ENCODE measurements at regions of chr17 and their contacts with region 1.

Region 1: GRCh38 chr17:41738077-41738735 is 3.8 kb upstream of the HAP1 start:
- DNase-seq: peak; percentile 69
- ATAC-seq: peak; percentile 88
- H3K4me3 ChIP-seq: peak overlapping the region in 1 of 2 experiments; percentile 26; a peak in 1 of 4 replicates
- H3K27ac ChIP-seq: peak overlapping the region; percentile 78
- H3K4me1 ChIP-seq: peaks cover 23% of the 10 kb centered on the region
- H3K27me3 ChIP-seq: no peaks in the 10 kb centered on the region
- CTCF ChIP-seq: peak; percentile 94

Region 2: DNA sequence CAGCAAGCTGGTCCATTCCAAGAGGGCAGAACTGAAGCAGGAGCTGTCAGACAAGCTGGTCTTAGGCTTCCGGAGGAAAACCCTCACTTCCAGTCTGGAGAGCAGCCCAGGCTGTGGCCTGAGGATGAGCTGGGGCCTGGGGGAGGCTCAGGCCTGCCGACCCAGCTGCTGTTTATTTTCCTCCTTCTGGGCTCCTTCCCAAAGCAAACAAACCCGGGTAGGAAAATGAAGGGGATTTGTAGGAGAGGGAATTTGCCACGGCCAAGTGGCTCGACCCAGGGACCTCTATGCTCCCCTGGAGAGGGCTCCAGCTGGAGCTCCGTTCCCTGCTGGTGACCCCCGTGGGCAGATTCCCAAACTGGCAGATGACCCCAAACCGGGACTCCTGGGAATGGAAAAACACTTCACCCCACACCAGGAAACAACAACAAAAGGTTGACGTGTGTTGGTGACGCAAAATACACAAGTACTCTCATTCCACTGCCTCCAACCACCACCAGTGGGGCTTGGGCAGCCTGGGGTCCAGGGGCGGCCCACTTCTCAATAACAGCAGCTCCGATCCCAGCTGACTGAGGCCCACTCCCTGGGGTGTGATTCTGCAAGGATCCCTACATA is 39.5 kb after region 1 on chr17:
- CTCF ChIA-PET with region 1: no interaction called
- POLR2A ChIA-PET with region 1: interaction called, 11 read pairs
- in situ Hi-C with region 1: no loop called
- intact Hi-C with region 1: no loop called
- DNase-seq: peak; percentile 69
- ATAC-seq: peak; percentile 87
- H3K4me3 ChIP-seq: peak overlapping the region; percentile 1 to 17; a peak in 2 of 4 replicates
- H3K27ac ChIP-seq: peak overlapping the region; percentile 94
- H3K4me1 ChIP-seq: peaks cover 72% of the 10 kb centered on the region
- H3K27me3 ChIP-seq: no peaks in the 10 kb centered on the region
- CTCF ChIP-seq: no peak

Measured in Panc1 (cell line).